Posterior vena cava (tissue), 2 donors: ENCODE measurements at regions of chr11 and their contacts with region 1.

Region 1: GRCh38 chr11:114059278-114059983 is at the start of gene ZBTB16:
- DNase-seq: peak; percentile 96
- total RNA-seq, gene ZBTB16: 188 to 208 TPM

Region 2: DNA sequence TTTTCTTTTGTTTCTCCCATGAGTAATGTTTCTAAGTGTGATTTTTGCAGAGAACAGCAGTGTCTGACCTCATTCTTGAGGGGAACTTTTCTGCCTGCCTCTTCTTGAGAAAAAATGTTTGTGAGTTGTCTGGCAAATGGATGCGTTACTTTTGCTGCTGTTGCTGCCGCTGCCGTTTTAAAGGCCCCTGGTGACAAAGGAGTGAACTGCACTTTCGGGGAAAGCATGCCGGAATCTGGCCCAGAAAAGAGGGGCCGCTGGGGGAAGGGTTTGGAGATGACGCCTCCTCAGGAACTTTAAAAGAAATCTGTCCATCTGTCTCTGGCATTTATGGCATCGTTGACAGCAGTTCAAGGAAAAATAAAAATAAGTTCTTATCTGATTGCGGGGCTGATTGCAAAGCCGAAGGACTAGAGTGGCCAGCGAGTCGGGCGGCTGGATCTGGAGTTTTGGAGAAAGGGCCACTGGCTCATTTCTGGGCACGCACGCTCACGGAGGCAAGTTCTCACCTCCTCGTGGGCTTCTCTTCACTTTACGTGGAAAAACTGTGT is 16.5 kb after region 1 on chr11:
- intact Hi-C with region 1: loop called in 1 of 2 experiments (anchors 2 kb)
- DNase-seq: peak; percentile 80

Region 3: DNA sequence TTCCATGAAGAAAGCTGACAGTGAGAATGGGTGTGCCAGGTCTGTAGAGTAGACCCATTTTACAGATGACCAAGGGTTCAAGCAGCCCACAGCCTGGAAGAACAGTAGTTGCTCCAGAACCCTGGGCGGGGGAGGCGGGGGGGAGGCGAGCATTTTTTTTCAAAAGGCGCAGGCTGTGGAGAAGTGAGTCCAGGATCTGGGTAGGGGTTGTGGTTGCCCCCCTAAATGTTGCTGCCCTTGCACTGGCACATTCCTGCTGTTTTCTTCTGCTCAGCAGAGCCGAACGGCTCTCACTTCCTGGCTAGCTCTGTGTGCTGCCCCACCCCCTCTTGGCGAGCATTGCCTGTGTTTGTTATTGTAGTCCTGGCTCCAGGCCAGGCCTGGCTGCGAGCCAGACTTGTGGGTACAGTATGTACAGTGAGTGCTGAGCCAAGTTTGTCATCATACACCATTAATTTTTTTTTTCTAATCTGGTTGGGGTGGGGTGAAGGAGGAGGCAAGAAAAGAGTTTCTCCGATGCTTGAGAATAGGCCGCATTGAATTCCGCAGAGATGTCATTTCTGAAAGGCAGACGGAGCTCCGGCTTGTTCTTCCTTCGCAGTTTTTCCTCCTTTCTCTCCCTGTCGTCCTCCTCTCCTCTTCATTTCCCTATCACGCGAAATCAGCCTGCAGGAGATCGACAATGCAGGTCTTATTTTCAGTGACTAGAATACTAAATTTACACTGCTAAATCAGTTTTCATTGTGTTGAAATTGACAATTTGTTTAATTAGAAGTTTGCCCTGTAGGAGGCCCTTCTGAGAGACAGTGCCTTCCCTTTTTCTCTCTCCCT is 100.6 kb after region 1 on chr11:
- intact Hi-C with region 1: loop called in 1 of 2 experiments (anchors 5 kb)
- DNase-seq: peak; percentile 100

Region 4: DNA sequence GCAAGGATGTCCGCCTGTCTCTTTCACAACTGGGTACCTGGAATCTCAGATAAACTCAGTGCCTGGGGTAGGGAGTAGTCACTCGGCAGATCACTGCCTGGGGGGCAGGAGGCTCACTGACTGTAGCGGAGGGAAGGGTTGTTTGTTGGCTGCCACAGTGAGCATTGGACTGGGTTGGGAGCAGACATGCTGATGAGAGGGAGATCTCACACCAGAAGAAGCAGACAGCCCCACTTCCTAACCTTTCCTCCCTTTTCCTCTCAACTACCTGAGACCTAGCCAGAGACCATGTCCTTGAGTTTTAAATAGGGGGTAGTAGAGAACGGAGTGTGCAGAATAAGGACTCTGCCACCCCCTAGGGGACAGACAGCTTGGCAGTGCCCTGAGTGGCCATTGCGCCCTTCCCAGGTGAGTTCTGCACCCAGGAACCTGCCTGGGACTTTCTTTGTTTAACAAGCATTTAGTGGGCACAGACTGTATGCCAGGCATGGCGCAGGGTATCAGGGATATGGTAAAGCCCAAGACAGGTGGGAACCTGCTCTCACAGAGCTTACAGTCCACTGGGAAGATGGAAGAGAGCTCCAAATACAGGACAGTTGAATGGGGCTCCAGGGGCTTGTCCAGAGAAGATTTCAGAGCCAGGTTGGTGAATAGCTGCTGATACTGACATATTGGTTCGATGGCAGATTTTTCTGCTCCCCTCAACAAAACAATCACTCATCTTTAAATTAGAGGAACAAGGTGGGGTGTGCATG is 121.0 kb after region 1 on chr11:
- intact Hi-C with region 1: loop called (anchors 5 to 10 kb)
- DNase-seq: no peak

Region 5: DNA sequence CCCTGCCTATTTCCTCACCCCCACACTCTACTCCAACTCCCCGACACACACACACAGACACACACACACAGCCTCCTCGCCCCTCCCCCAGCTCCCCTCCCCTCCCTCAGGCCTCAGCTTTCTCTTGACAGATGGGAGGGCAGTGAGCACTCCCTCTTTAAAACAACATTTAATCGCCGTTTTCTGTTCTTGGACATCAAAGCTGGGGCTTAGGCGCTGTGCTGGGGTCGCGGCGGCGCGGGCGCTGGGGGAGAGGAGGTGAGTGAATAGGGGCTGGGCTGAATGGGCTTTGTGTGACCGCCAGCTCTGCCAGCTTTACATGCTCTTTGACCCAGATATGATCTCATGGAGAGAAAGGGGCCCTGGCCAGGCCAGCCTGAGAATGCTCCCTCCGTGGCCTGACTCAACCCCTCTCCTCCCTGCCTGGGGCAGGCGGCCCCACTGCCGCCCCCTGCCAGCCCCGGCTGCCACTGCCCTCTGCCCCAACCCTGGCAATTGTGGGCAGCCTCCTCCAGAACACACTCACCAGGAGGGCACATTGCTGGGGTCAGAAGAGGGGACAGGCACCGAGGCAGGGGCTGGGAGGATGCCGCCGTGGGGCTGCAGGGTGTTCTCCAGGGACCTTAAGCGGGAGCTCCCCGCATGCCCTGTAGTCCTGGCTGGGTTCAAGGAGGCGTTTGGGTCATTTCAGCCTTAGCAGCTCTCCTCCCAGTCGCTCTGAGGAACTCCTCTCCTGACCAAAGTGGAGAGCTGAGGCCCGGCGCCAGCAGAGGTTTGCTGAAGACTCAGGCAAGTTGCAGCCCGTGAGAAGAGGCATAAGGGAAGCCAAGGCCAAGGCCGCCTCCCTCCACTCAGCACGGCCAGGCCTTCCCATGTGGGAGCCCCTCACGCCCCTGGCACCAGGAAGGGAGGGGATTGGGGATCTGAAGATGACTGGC is 198.5 kb after region 1 on chr11:
- intact Hi-C with region 1: loop called in 1 of 2 experiments (anchors 10 kb)
- DNase-seq: peak; percentile 88